ENCODE measurements at regions of chr11 and their contacts with region 1.

Region 1: GRCh38 chr11:62081378-62082291 is 42.2 kb upstream of the INCENP start:
- DNase-seq: peak; percentile 67 to 75 (median 73)
- H3K4me3 ChIP-seq: peak overlapping the region in 3 of 7 experiments; percentile 41 to 70 (median 43)
- H3K27ac ChIP-seq: no peak overlapping the region
- H3K4me1 ChIP-seq: peaks cover 0 to 7% (median 5%) of the 10 kb centered on the region in 4 experiments
- H3K27me3 ChIP-seq: no peaks in the 10 kb centered on the region

Region 2: DNA sequence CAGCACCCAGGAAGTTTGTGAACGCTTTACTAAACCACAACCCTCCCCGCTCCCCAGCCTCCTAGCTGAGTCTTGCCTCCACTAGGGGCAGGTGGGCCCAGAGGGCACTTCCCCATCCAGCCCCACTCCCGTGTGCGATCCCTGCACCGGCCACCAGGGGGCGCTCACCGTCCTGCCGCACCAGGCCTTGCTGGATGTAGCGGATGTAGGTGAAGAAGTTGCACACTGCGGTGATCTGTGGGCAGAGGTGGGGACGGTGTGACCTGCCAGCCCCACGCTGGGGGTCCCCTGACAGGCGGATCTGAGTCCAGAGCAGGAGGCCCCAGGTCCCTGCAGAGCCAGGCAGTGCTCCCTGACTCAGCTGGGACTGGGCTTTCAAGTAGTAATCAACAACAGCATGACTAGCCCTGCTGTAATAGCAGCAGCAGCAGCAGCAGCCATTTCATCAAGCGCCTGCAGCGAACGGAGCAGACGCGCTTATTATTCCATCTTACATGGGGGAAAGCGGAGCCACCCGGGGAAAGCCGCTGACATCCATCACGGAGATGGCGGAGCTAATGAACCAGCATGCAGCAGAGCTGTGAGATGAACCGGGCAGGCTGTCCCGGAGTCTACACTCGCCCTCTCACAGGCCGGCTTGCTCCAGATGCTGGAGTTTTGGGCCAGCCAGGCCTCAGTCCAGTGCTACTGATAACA is 182.3 kb before region 1 on chr11:
- CTCF ChIA-PET with region 1: interaction called, 175 read pairs
- POLR2A ChIA-PET with region 1: interaction called, 3 read pairs
- DNase-seq: peak; percentile 87 to 94 (median 92)
- H3K4me3 ChIP-seq: no peak overlapping the region
- H3K27ac ChIP-seq: no peak overlapping the region
- H3K4me1 ChIP-seq: peaks cover 0 to 7% (median 2%) of the 10 kb centered on the region in 4 experiments
- H3K27me3 ChIP-seq: peaks cover 0 to 2% (median 0%) of the 10 kb centered on the region in 5 experiments

Region 3: GRCh38 chr11:61954851-61955421 is 126.7 kb before region 1 on chr11:
- CTCF ChIA-PET with region 1: interaction called, 115 read pairs
- POLR2A ChIA-PET with region 1: interaction called, 10 read pairs
- DNase-seq: peak in 2 of 3 donors; percentile 84 to 87
- H3K4me3 ChIP-seq: peak overlapping the region in 5 of 7 experiments; percentile 15 to 59 (median 32)
- H3K27ac ChIP-seq: no peak overlapping the region
- H3K4me1 ChIP-seq: peaks cover 0 to 23% (median 17%) of the 10 kb centered on the region in 4 experiments
- H3K27me3 ChIP-seq: peaks cover 0 to 5% (median 0%) of the 10 kb centered on the region in 5 experiments

Region 4: GRCh38 chr11:62033191-62034044 is 48.2 kb before region 1 on chr11:
- CTCF ChIA-PET with region 1: interaction called, 13 read pairs
- POLR2A ChIA-PET with region 1: no interaction called
- DNase-seq: peak in 2 of 3 donors; percentile 42 to 64
- H3K4me3 ChIP-seq: no peak overlapping the region
- H3K27ac ChIP-seq: no peak overlapping the region
- H3K4me1 ChIP-seq: peaks cover 0 to 6% (median under 1%) of the 10 kb centered on the region in 4 experiments
- H3K27me3 ChIP-seq: no peaks in the 10 kb centered on the region

Region 5: GRCh38 chr11:62061351-62062222 is 20.0 kb before region 1 on chr11:
- CTCF ChIA-PET with region 1: interaction called, 17 read pairs
- POLR2A ChIA-PET with region 1: interaction called, 3 read pairs
- DNase-seq: no peak
- H3K4me3 ChIP-seq: no peak overlapping the region
- H3K27ac ChIP-seq: no peak overlapping the region
- H3K4me1 ChIP-seq: no peaks in the 10 kb centered on the region
- H3K27me3 ChIP-seq: no peaks in the 10 kb centered on the region

Measured in common myeloid progenitor, CD34-positive (primary cell).